AG04449 (cell line): ENCODE measurements at regions of chr1 and their contacts with region 1.

Region 1: DNA sequence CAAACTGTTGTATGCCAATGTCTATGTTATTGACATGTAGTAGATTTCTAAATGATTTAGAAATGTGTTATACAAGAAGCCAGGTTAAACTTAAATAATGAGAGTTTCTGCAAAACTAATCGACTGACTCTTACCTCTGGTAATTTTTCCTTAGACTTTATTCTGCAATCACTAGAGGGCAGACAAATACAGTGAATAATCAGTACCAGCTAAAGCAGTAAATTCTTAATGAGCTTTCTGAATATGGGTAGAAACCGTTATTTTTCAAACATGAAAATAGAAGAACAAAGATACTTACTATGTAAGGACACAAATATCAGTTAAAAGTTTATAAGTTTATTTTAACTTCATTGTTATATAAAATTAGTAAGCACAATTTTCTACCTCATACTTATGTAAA is 97.9 kb upstream of the RGS1 start:
- DNase-seq: no peak
- H3K4me3 ChIP-seq: no peak overlapping the region
- CTCF ChIP-seq: peak; percentile 33

Region 2: GRCh38 chr1:192395895-192396294 is 81.7 kb before region 1 on chr1:
- CTCF ChIA-PET with region 1: no interaction called
- POLR2A ChIA-PET with region 1: no interaction called
- DNase-seq: no peak
- H3K4me3 ChIP-seq: no peak overlapping the region
- CTCF ChIP-seq: no peak

Region 3: GRCh38 chr1:192445848-192446489 is 31.7 kb before region 1 on chr1:
- CTCF ChIA-PET with region 1: no interaction called
- POLR2A ChIA-PET with region 1: no interaction called
- DNase-seq: no peak
- H3K4me3 ChIP-seq: no peak overlapping the region
- CTCF ChIP-seq: peak; percentile 18

Region 4: GRCh38 chr1:192573499-192573898 is 95.9 kb after region 1 on chr1:
- CTCF ChIA-PET with region 1: interaction called, 226 read pairs
- POLR2A ChIA-PET with region 1: no interaction called
- DNase-seq: no peak
- H3K4me3 ChIP-seq: no peak overlapping the region
- CTCF ChIP-seq: no peak

Region 5: DNA sequence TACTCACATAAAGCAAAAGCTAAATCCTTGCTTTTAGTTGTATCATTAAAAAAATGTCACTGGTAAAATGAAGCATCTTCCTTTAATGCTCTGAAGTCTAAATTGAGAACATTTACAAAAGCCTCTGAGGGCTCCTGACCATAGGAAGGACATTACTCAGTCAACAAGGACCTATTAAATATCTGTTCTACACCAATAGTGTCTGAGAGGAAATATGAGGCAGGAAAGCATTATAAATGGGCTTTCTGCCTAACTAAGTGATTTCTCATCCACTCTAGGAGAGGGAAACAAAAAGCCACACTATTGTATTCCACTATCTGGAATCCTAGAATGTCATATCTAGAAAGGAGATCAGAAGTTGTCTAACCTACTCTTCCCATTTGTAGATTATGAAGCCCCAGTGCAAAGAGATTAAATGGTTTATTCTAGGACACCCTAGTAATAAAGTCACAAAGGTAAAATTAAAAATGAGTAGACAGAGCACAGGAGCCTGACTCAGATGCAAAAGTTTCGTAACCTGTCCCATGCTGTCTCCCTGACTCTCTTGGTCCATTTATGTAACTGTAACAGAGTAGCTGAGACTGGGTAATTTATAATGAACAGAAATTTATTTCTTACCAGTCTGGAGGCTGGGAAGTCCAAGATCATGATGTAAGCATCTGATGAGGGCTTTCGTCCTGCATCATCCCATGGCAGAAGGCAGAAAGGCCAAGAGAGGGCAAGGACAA is 115.5 kb after region 1 on chr1:
- CTCF ChIA-PET with region 1: interaction called, 226 read pairs
- POLR2A ChIA-PET with region 1: no interaction called
- DNase-seq: no peak
- H3K4me3 ChIP-seq: no peak overlapping the region
- CTCF ChIP-seq: no peak

Region 6: DNA sequence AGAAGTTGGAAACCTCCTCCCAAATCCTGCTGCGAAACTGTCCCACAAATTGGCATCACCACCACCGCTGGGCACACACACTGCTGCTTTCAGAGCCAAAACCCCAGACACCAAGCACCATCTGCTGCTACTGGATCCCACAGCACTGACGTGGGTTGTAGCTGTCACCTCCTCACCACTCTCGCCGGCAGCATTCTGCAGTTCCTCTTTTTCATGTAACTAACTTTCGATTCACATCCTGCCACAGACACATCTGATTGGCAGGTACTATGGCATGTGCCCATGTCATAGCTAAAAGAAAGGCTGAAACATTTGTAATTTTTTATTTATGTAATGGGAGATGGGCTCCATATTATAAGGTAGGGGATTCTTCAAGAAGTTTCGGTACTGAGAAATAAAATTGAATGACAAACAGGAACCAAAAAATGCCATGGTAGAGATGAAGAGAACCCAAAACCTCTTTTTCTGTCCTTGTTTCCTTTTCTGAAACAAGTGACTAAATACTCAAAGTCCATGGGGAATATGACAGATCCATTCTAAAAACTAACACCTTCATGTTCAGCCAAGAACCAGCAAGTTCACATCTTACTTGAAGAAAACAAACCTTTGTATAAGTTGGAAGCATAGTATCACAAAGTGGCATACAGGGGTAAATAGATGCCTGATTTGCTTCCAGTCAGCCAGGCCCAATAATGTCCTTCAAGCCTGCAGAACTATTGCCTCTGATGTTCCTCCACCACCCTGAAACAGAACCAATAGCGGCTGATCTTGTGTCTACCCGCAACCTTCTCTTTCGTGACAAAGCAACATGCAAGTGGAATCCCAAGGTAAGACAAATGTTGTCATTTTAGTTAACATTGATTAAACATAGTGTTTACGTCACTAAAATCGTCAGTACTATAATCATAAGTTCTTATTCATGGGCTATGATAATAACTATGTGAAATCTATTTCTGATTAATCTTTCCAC is 131.8 kb after region 1 on chr1:
- CTCF ChIA-PET with region 1: interaction called, 122 read pairs
- POLR2A ChIA-PET with region 1: no interaction called
- DNase-seq: no peak
- H3K4me3 ChIP-seq: no peak overlapping the region
- CTCF ChIP-seq: no peak

Region 7: GRCh38 chr1:192678099-192678498 is 200.5 kb after region 1 on chr1:
- CTCF ChIA-PET with region 1: no interaction called
- POLR2A ChIA-PET with region 1: no interaction called
- DNase-seq: no peak
- H3K4me3 ChIP-seq: no peak overlapping the region
- CTCF ChIP-seq: no peak

Region 8: DNA sequence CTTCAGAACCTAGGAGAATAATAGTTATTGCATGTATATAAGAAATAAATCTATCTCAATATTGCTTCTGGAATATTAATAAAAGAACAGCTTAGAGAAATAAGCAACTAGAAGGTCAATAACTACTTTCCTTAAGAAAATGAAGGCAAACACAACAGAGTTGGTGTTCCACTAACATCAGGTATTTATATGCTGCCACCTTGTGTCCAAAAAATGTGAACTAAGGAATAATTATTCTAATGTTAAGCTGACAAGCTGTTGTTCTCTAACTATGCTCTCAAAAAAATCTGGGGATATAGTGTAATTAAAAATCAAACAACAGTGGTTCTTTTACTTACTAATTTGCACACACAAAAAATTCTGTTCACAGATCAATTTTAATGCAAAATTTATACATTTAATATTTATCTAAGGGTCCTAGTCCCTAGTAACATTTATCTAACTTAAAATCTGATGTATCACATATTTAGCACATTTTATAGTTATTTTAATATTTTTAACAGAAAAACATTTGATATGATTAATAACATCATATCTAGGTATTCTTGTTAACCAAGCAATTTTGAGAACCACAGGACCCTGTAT is 541.9 kb after region 1 on chr1:
- CTCF ChIA-PET with region 1: interaction called, 117 read pairs
- POLR2A ChIA-PET with region 1: no interaction called
- DNase-seq: no peak
- H3K4me3 ChIP-seq: no peak overlapping the region
- CTCF ChIP-seq: peak; percentile 25

Region 9: GRCh38 chr1:193121616-193122593 is 644.3 kb after region 1 on chr1 and contains the start of gene CDC73:
- CTCF ChIA-PET with region 1: interaction called, 11 read pairs
- POLR2A ChIA-PET with region 1: no interaction called
- DNase-seq: peak; percentile 82
- H3K4me3 ChIP-seq: peak within 1 kb of the TSS; percentile 89
- CTCF ChIP-seq: peak; percentile 98